Activated CD4-positive, alpha-beta T cell treated with anti-CD3 and anti-CD28 coated beads, Interleukin-2, amount 10 ng/mL, durations not matched to agents 24 days and 14 days (primary cell): ENCODE measurements at regions of chrX and their contacts with region 1.

Region 1: GRCh38 chrX:153667956-153668396 is 5.6 kb downstream of the PNCK start:
- DNase-seq: peak; percentile 92
- H3K4me3 Mint-ChIP-seq: peak overlapping the region; percentile 84
- H3K27ac Mint-ChIP-seq: peak overlapping the region; percentile 53
- H3K4me1 Mint-ChIP-seq: peaks cover 9% of the 10 kb centered on the region
- H3K27me3 Mint-ChIP-seq: peaks cover 16% of the 10 kb centered on the region

Region 2: GRCh38 chrX:152941328-152942106 is 726.5 kb before region 1 on chrX:
- intact Hi-C with region 1: loop called (anchors 5 kb)
- DNase-seq: peak; percentile 96
- H3K4me3 Mint-ChIP-seq: peak overlapping the region; percentile 88
- H3K27ac Mint-ChIP-seq: peak overlapping the region; percentile 84
- H3K4me1 Mint-ChIP-seq: peaks cover 4% of the 10 kb centered on the region
- H3K27me3 Mint-ChIP-seq: no peaks in the 10 kb centered on the region

Region 3: DNA sequence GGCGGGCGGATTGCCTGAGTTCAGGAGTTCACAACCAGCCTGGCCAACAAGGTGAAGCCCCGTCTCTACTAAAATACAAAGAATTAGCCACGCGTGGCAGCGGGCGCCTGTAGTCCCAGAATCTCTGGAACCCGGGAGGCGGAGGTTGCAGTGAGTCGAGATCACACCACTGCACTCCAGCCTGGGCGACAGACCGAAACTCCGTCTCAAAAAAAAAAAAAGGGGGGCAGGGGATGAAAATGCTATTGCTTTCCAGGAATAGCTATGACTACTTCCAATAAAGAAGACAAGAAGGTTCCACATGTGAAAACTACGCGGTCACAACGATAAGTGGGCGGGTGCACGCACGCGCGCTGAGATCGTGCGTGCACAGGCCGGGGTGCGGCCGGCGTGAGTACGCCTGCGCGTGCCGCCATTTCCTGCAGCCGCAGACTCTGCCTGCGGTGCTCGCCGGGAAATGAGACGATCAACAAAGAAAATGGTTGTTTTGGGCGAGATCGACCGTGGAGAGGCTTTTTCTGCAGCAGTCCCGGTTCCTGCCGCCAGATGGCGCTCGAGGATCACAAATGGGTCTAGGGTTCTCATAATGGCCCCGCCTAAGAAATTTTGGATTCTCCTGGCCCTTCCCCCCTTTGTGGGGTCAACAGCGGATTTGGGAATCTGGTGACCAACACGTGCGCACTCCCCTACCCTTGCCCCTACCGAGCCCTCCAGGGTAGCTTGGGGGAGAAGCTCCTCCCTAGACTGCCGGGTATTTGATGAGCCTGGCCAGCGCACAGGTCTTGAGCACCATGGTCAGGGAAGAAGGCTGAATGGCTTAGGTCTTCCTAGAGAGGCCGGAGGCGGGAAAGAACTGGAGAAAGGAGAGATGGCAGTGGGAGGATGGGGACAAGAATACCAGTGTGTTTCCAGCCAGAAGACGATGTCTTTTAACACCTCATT is 709.2 kb before region 1 on chrX:
- intact Hi-C with region 1: loop called (anchors 1 kb)
- DNase-seq: peak; percentile 96
- H3K4me3 Mint-ChIP-seq: peak overlapping the region; percentile 72
- H3K27ac Mint-ChIP-seq: peak overlapping the region; percentile 91
- H3K4me1 Mint-ChIP-seq: peaks cover 7% of the 10 kb centered on the region
- H3K27me3 Mint-ChIP-seq: peaks cover 2% of the 10 kb centered on the region

Region 4: GRCh38 chrX:153032397-153033118 is 635.4 kb before region 1 on chrX:
- intact Hi-C with region 1: loop called (anchors 10 kb)
- DNase-seq: peak; percentile 90
- H3K4me3 Mint-ChIP-seq: peak overlapping the region; percentile 86
- H3K27ac Mint-ChIP-seq: peak overlapping the region; percentile 85
- H3K4me1 Mint-ChIP-seq: peaks cover 4% of the 10 kb centered on the region
- H3K27me3 Mint-ChIP-seq: no peaks in the 10 kb centered on the region

Region 5: DNA sequence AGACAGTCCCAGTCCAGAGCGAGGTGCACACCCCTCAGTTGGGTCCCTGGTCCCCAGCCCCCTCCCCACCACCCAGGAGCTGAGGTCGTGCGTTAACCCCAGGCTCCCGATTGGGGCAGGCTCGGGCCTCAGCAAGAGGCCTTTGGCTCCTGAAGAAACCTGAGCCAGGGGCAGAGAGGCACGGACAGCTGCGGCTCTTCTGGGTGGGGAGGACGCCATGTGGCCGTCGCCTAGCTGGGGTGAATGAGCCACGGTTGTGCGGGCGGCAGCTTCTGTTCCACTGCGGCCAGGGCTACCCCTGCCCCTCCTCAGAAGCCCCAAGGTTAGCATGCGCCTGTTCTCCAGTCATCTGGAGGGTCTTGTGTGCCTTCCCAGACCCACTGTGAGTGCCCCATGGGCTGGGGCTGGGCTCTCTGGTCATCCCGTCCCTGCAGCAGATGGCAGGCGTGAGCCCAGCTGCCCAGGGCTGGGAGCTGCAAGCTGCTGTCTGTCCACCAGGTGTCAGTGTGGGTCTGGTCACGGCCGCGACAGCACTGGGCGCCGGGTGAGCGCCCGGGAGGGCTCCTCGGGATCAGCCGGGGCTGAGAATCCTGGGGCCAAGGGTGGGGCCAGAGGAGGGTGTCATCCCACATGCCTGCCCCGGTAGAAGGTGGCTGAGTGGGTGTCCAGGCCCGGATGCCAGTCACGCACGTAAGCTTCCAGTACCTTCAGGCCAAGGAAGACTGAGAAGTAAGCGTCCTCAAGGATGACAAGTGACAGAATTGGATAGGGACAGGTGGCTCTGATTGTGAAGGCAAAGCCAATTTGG is 128.6 kb before region 1 on chrX:
- intact Hi-C with region 1: loop called (anchors 5 kb)
- DNase-seq: peak; percentile 87
- H3K4me3 Mint-ChIP-seq: no peak overlapping the region
- H3K27ac Mint-ChIP-seq: no peak overlapping the region
- H3K4me1 Mint-ChIP-seq: no peaks in the 10 kb centered on the region
- H3K27me3 Mint-ChIP-seq: no peaks in the 10 kb centered on the region

Region 6: DNA sequence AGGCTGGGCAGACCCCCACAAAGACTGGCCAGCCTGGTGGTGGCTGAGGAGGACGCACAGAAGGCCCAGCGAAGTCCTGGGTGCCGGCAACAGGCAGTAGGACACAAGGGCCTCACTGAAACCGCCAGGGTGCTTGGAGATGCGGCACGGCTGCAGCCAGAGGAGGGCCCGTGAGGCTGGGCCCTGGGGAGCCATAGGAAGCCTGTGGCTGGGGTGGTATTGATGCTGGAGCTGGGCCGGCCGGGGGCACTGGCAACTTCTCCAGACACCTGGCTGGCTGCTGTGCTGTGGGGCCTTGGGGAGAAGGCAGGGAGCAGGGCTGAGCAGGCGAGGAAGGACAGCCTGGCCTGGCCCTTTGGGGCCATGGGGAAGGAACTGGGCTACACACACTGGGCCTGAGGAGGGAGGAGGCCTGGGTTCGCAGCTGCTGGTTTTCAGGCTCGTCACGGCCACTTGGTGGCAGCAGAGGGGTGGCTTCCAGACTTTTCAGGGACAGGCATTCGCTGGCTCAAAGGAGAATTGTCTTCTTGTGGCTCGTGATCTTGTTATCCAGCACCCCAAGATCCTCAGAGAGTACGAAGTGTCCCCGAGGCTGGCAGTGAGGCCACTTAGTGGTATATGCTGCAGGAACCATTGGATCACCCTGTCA is 113.3 kb before region 1 on chrX:
- intact Hi-C with region 1: loop called (anchors 1 kb)
- DNase-seq: peak; percentile 87
- H3K4me3 Mint-ChIP-seq: no peak overlapping the region
- H3K27ac Mint-ChIP-seq: no peak overlapping the region
- H3K4me1 Mint-ChIP-seq: no peaks in the 10 kb centered on the region
- H3K27me3 Mint-ChIP-seq: no peaks in the 10 kb centered on the region

Region 7: DNA sequence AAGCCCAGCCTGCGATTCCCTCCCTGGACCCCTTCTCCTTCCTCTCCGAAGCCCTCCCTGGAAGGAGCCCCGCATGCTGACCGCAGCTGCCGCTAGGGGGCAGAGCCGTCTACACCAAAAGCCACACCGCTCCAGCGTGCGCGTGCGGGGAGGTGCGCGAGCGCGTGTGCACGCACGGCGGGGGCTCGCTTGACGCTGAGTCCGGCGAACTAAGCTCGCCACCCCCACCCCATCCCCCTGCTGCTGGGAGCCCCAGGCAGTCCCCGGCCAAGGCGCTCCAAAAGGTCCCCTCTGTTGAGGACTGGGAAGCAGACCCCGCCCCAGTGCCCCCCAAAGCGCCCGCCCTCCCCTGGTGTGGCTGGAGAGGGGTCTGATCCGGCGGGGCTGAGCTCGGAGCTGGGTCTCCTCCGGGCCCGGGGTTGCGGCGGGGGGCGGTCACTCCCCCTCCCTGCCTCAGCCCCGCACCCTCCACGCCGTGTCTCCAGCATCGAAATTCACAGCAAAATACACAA is 58.0 kb before region 1 on chrX:
- intact Hi-C with region 1: loop called (anchors 5 kb)
- DNase-seq: peak; percentile 91
- H3K4me3 Mint-ChIP-seq: peak overlapping the region; percentile 82
- H3K27ac Mint-ChIP-seq: peak overlapping the region; percentile 77
- H3K4me1 Mint-ChIP-seq: peaks cover 8% of the 10 kb centered on the region
- H3K27me3 Mint-ChIP-seq: peaks cover 12% of the 10 kb centered on the region